ENCODE measurements at regions of chr12 and their contacts with region 1.

Region 1: DNA sequence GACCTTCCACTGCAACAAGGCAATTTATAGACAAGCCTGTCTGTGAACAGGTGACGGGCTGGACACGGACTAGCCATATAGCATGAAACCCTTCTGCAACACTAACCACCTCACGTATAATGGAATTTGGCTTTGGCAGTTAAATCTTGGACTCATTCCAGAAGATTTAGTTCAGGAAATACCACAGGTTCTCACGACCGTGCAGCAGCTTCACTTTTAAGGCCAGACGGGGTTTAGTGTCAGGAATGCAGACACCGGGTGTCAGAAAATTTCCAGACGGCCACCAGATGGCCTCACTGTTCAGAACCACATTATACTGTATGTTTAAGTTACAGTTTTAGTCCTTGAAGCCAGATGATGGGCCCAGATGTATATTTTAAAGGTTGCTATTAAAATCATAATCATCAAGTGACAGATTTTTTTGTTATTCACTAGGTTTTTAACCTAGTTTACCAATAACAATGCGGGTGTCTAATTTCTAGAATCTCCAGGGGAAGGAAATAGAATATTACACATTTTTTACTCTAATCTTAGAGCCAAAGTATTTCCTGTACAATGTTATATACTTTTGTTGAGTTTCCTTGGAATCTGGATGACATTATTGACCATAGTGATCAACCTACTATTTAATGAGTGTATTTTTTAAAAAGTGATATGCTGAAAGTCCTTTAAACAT is 90.5 kb upstream of the TMPO start:
- DNase-seq: peak; percentile 72 to 83 (median 76)
- ATAC-seq: peak; percentile 92
- H3K4me3 ChIP-seq: no peak overlapping the region
- H3K27ac ChIP-seq: no peak overlapping the region
- H3K4me1 ChIP-seq: peaks cover 14% of the 10 kb centered on the region
- H3K27me3 ChIP-seq: no peaks in the 10 kb centered on the region
- CTCF ChIP-seq: peak; percentile 48 to 78 (median 72)
- POLR2A ChIP-seq: no peak

Region 2: GRCh38 chr12:98154850-98155249 is 270.0 kb before region 1 on chr12:
- intact Hi-C with region 1: no loop called
- DNase-seq: peak in 3 of 4 donors; percentile 12 to 25 (median 20)
- ATAC-seq: peak; percentile 45
- H3K4me3 ChIP-seq: no peak overlapping the region
- H3K27ac ChIP-seq: no peak overlapping the region
- H3K4me1 ChIP-seq: no peaks in the 10 kb centered on the region
- H3K27me3 ChIP-seq: no peaks in the 10 kb centered on the region
- CTCF ChIP-seq: peak in 4 of 7 experiments; percentile 8 to 33 (median 21)
- POLR2A ChIP-seq: no peak

Region 3: GRCh38 chr12:98516184-98516873 is 91.5 kb after region 1 on chr12:
- intact Hi-C with region 1: loop called (anchors 10 kb)
- DNase-seq: peak; percentile 77 to 83 (median 79)
- ATAC-seq: peak; percentile 58
- H3K4me3 ChIP-seq: peak overlapping the region; percentile 44 to 88
- H3K27ac ChIP-seq: peak overlapping the region; percentile 92 to 96 (median 94)
- H3K4me1 ChIP-seq: peaks cover 56% of the 10 kb centered on the region
- H3K27me3 ChIP-seq: no peaks in the 10 kb centered on the region
- CTCF ChIP-seq: peak; percentile 53 to 91 (median 84)
- POLR2A ChIP-seq: no peak

Measured in body of pancreas (tissue), 4 donors.